A549 (cell line): ENCODE measurements at regions of chr10 and their contacts with region 1.

Region 1: DNA sequence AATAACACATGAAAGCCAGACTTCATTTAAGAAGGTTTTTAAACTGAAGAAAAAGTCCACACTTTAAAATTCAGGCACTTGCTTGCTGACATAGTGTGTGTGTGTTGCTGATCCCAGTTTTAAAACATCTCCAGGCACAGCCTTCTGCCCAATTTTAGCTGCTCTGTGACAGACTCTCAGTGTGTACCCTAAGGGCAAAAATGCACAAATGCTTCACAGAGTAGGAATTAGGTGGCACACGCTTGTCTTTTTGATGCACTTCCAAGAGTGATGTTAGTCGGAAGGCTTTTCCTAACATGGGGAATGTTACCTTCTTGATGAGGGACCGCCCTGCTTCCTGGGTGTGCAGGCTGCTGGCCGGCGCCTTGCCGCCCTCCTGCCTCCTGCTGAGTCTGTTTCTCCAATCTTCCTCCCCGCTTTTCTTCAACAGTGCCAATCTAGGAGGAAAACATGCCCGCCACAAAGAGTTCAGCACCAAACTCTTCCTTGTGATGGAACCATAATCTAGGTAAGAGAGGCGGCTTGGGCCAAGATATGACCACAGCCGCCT is 122.3 kb downstream of the SVIL start:
- DNase-seq: no peak
- ATAC-seq: no peak
- H3K4me3 ChIP-seq: no peak overlapping the region
- H3K27ac ChIP-seq: no peak overlapping the region
- H3K4me1 ChIP-seq: no peaks in the 10 kb centered on the region
- CTCF ChIP-seq: no peak
- EP300 ChIP-seq: no peak
- POLR2A ChIP-seq: no peak
- RAD21 ChIP-seq: no peak

Region 2: DNA sequence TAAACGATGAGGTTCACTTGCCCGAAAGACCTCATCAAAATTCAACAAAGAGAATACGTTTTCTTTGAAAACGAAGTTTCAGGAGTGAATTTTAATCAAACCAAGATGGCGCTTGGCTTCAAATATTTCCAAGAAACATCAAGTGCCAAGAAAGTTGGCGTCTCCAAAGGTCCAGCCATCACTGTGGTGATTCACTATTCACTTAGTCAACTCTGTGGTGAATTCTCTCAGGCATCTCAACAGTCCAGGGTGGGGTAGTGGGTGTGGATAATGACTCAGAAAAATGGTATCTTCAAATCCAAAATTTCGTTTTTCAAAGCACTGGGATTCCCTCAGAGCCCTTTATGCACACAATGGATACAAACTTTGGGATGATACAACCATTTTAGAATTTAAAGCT is 10.8 kb before region 1 on chr10:
- CTCF ChIA-PET with region 1: interaction called, 29 read pairs
- POLR2A ChIA-PET with region 1: no interaction called
- DNase-seq: peak; percentile 55 to 78
- ATAC-seq: peak; percentile 90
- H3K4me3 ChIP-seq: no peak overlapping the region
- H3K27ac ChIP-seq: no peak overlapping the region
- H3K4me1 ChIP-seq: peaks cover 11% of the 10 kb centered on the region; the same call in 2 of the 3 replicates
- CTCF ChIP-seq: no peak
- EP300 ChIP-seq: no peak
- POLR2A ChIP-seq: no peak
- RAD21 ChIP-seq: no peak

Region 3: GRCh38 chr10:29932991-29933390 is 420.5 kb after region 1 on chr10:
- CTCF ChIA-PET with region 1: no interaction called
- POLR2A ChIA-PET with region 1: no interaction called
- DNase-seq: no peak
- ATAC-seq: no peak
- H3K4me3 ChIP-seq: no peak overlapping the region
- H3K27ac ChIP-seq: no peak overlapping the region
- H3K4me1 ChIP-seq: no peaks in the 10 kb centered on the region
- CTCF ChIP-seq: no peak
- EP300 ChIP-seq: no peak
- POLR2A ChIP-seq: no peak
- RAD21 ChIP-seq: no peak